Naive thymus-derived CD4-positive, alpha-beta T cell (primary cell): ENCODE measurements at regions of chr6 and their contacts with region 1.

Region 1: DNA sequence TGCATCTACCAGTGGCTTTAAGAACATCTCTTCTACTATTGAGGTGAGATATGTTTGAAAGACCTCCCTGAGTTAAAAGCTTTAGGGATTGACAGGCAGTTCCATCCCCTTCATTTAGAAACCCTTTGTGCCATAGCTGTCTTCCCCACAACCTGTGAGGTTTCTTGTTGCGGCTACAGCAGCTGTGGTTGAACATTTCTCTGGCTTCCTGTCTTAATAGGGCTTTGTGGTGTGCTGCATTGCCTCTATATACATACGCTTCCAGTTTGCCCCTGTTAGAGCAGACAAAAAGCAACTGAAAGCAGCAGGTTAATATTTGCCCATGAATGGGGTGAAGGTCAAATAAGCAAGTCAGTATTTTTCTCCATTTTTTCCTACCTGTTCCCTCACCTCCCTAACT is 210.2 kb downstream of the TMEM200A start:
- DNase-seq: peak; percentile 5 to 82 (median 72)
- ATAC-seq: peak; percentile 94
- H3K4me3 ChIP-seq: peak overlapping the region; percentile 31
- H3K4me3 Mint-ChIP-seq: peak overlapping the region; percentile 35 to 82 (median 73)
- H3K27ac ChIP-seq: peak overlapping the region; percentile 8
- H3K27ac Mint-ChIP-seq: peak overlapping the region; percentile 29 to 91 (median 67)
- H3K4me1 ChIP-seq: peaks cover 25 to 39% of the 10 kb centered on the region in 2 donors
- H3K4me1 Mint-ChIP-seq: peaks cover 32 to 62% (median 48%) of the 10 kb centered on the region in 7 donors
- H3K27me3 ChIP-seq: no peaks in the 10 kb centered on the region
- H3K27me3 Mint-ChIP-seq: peaks cover 0 to 4% (median 0%) of the 10 kb centered on the region in 5 donors

Region 2: GRCh38 chr6:130365166-130366106 is 210.5 kb before region 1 on chr6 and contains the start of gene TMEM200A:
- CTCF ChIA-PET with region 1: no interaction called
- POLR2A ChIA-PET with region 1: no interaction called
- intact Hi-C with region 1: loop called in 1 of 2 experiments (anchors 5 kb)
- DNase-seq: peak in 6 of 9 donors; percentile 7 to 63 (median 21)
- ATAC-seq: peak; percentile 64
- H3K4me3 ChIP-seq: peak within 1 kb of the TSS; percentile 68
- H3K4me3 Mint-ChIP-seq: peak within 1 kb of the TSS; percentile 66 to 90 (median 83)
- H3K27ac ChIP-seq: no peak within 1 kb of the TSS
- H3K27ac Mint-ChIP-seq: peak within 1 kb of the TSS in 2 of 9 donors; percentile 55 to 64
- H3K4me1 ChIP-seq: peaks cover 4 to 5% of the 10 kb centered on the region in 2 donors
- H3K4me1 Mint-ChIP-seq: peaks cover 7 to 26% (median 17%) of the 10 kb centered on the region in 7 donors
- H3K27me3 ChIP-seq: no peaks in the 10 kb centered on the region
- H3K27me3 Mint-ChIP-seq: peaks cover 7 to 64% (median 38%) of the 10 kb centered on the region in 5 donors
- total RNA-seq, gene TMEM200A: 0.19 to 7.2 (median 0.99) TPM in 4 of 5 experiments, not detected in the other

Region 3: DNA sequence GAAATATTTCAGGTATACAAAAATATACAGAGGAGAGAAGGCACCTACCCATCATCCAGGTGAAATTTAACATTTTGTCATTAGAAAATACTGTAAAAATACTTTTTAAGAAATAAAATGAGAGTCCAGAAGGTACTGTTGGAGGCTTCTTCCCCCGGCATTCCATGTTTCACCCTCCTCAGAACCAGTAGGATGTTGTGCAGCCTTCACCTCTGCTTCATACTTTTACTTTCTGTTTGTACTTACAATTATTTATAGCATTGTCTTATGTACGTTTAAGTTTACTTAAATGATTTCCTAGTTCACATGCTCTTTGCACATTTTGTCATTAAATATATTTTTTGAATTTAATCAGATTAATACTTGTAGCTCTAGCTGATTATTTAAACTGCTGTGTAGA is 179.2 kb before region 1 on chr6:
- CTCF ChIA-PET with region 1: no interaction called
- POLR2A ChIA-PET with region 1: no interaction called
- intact Hi-C with region 1: no loop called
- DNase-seq: no peak
- ATAC-seq: no peak
- H3K4me3 ChIP-seq: peak overlapping the region; percentile 31
- H3K4me3 Mint-ChIP-seq: peak overlapping the region in 9 of 10 donors; percentile 48 to 80 (median 76)
- H3K27ac ChIP-seq: no peak overlapping the region
- H3K27ac Mint-ChIP-seq: peak overlapping the region in 1 of 9 donors; percentile 6
- H3K4me1 ChIP-seq: peaks cover 0 to 6% of the 10 kb centered on the region in 2 donors
- H3K4me1 Mint-ChIP-seq: peaks cover 5 to 28% (median 16%) of the 10 kb centered on the region in 7 donors
- H3K27me3 ChIP-seq: no peaks in the 10 kb centered on the region
- H3K27me3 Mint-ChIP-seq: peaks cover 0 to 14% (median 0%) of the 10 kb centered on the region in 5 donors

Region 4: GRCh38 chr6:130620338-130620781 is 44.4 kb after region 1 on chr6:
- CTCF ChIA-PET with region 1: no interaction called
- POLR2A ChIA-PET with region 1: no interaction called
- intact Hi-C with region 1: loop called in 1 of 2 experiments (anchors 5 kb)
- DNase-seq: no peak
- ATAC-seq: no peak
- H3K4me3 ChIP-seq: no peak overlapping the region
- H3K4me3 Mint-ChIP-seq: no peak overlapping the region
- H3K27ac ChIP-seq: no peak overlapping the region
- H3K27ac Mint-ChIP-seq: no peak overlapping the region
- H3K4me1 ChIP-seq: no peaks in the 10 kb centered on the region
- H3K4me1 Mint-ChIP-seq: peaks cover 0 to 18% (median 4%) of the 10 kb centered on the region in 7 donors
- H3K27me3 ChIP-seq: no peaks in the 10 kb centered on the region
- H3K27me3 Mint-ChIP-seq: peaks cover 0 to 2% (median 0%) of the 10 kb centered on the region in 5 donors

Region 5: GRCh38 chr6:130655586-130655985 is 79.6 kb after region 1 on chr6:
- CTCF ChIA-PET with region 1: no interaction called
- POLR2A ChIA-PET with region 1: no interaction called
- intact Hi-C with region 1: loop called in 1 of 2 experiments (anchors 5 kb)
- DNase-seq: no peak
- ATAC-seq: no peak
- H3K4me3 ChIP-seq: no peak overlapping the region
- H3K4me3 Mint-ChIP-seq: no peak overlapping the region
- H3K27ac ChIP-seq: no peak overlapping the region
- H3K27ac Mint-ChIP-seq: no peak overlapping the region
- H3K4me1 ChIP-seq: no peaks in the 10 kb centered on the region
- H3K4me1 Mint-ChIP-seq: peaks cover 0 to 4% (median 0%) of the 10 kb centered on the region in 7 donors
- H3K27me3 ChIP-seq: no peaks in the 10 kb centered on the region
- H3K27me3 Mint-ChIP-seq: no peaks in the 10 kb centered on the region